ENCODE measurements at regions of chr2 and their contacts with region 1.

Region 1: DNA sequence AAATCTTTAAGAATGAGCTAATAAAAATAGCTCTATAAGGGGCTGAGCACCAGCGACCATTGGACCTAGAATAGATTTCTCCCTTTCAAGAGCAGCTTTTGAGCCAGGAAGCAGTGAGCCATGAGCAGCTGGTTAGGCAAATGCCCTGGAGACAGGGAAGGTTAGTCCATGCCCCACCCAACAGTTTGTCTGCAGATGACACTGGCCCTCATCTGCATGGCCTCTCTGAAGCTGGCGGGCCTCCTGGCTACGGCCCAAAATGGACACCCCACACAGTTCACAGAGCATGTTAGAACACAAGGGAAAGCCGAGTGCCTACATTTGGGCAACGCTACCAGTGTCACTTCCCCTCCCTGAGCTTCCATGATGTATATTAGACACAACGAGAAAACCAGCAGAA is 201.1 kb downstream of the MGAT5 start:
- DNase-seq: peak in 1 of 2 experiments; percentile 15
- H3K4me3 ChIP-seq: no peak overlapping the region
- H3K4me3 Mint-ChIP-seq: no peak overlapping the region
- H3K27ac Mint-ChIP-seq: no peak overlapping the region
- H3K4me1 ChIP-seq: peaks cover 3% of the 10 kb centered on the region; the same call in 1 of the 2 replicates
- H3K4me1 Mint-ChIP-seq: peaks cover 7% of the 10 kb centered on the region
- H3K27me3 ChIP-seq: no peaks in the 10 kb centered on the region
- H3K27me3 Mint-ChIP-seq: no peaks in the 10 kb centered on the region
- CTCF ChIP-seq: no peak

Region 2: DNA sequence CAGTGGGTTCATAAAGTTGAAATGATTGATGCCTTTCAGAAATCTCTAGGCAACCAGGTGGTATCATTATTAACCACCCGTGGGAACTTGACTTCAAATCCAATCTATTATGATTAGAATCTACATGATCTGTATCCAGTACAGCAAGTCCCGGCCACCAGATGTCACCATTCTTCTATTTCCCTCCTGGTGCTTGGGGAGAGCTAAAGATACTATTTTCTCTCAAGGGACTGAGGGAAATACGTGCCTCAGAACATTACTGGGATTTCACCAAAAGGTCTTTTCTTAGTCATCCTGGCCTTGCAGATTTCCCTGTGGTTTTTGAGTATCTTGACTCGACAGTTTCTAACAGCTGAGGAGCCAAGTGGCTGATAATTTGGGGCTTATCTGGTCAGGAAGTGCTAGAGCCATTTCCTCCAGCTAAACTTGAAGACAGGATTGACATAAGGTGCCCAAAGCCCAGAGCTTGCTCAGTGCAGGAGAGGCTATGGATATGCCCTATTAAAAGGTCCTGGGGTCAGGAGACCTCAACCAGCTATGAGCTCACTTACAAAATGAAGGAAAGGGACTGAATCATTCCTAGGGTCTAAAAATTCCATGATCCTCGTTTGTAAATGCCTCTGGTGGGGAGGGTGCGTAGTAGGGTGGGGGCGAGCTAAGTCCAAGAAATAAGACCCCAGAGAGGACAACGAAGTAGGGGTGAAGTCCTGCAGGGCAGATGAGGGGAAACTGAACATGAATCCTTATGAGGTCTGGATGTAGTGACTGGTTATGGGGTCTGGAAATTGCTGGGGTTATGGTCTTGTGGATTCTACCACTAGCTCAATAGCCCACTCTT is 336.4 kb before region 1 on chr2:
- CTCF ChIA-PET with region 1: interaction called, 21 read pairs
- POLR2A ChIA-PET with region 1: no interaction called
- intact Hi-C with region 1: loop called (anchors 1 kb)
- DNase-seq: peak; percentile 81 to 89
- H3K4me3 ChIP-seq: no peak overlapping the region
- H3K4me3 Mint-ChIP-seq: peak overlapping the region; percentile 74
- H3K27ac Mint-ChIP-seq: no peak overlapping the region
- H3K4me1 ChIP-seq: peaks cover under 1% of the 10 kb centered on the region; the same call in 1 of the 2 replicates
- H3K4me1 Mint-ChIP-seq: peaks cover 12% of the 10 kb centered on the region
- H3K27me3 ChIP-seq: no peaks in the 10 kb centered on the region
- H3K27me3 Mint-ChIP-seq: no peaks in the 10 kb centered on the region
- CTCF ChIP-seq: peak; percentile 60 to 84

Region 3: GRCh38 chr2:134375935-134376334 is 79.0 kb before region 1 on chr2:
- CTCF ChIA-PET with region 1: interaction called, 21 read pairs
- POLR2A ChIA-PET with region 1: no interaction called
- intact Hi-C with region 1: loop called (anchors 1 kb)
- DNase-seq: peak; percentile 53 to 58
- H3K4me3 ChIP-seq: no peak overlapping the region
- H3K4me3 Mint-ChIP-seq: no peak overlapping the region
- H3K27ac Mint-ChIP-seq: no peak overlapping the region
- H3K4me1 ChIP-seq: 0 out of 2 replicates have a peak, but pooled peaks cover 5% of the 10 kb centered on the region
- H3K4me1 Mint-ChIP-seq: no peaks in the 10 kb centered on the region
- H3K27me3 ChIP-seq: no peaks in the 10 kb centered on the region
- H3K27me3 Mint-ChIP-seq: no peaks in the 10 kb centered on the region
- CTCF ChIP-seq: peak in 1 of 2 experiments; percentile 58

Region 4: GRCh38 chr2:134391751-134392160 is 63.2 kb before region 1 on chr2:
- CTCF ChIA-PET with region 1: interaction called, 4 read pairs
- POLR2A ChIA-PET with region 1: no interaction called
- intact Hi-C with region 1: loop called (anchors 5 kb)
- DNase-seq: no peak
- H3K4me3 ChIP-seq: no peak overlapping the region
- H3K4me3 Mint-ChIP-seq: no peak overlapping the region
- H3K27ac Mint-ChIP-seq: no peak overlapping the region
- H3K4me1 ChIP-seq: no peaks in the 10 kb centered on the region
- H3K4me1 Mint-ChIP-seq: no peaks in the 10 kb centered on the region
- H3K27me3 ChIP-seq: no peaks in the 10 kb centered on the region
- H3K27me3 Mint-ChIP-seq: no peaks in the 10 kb centered on the region
- CTCF ChIP-seq: no peak

Region 5: DNA sequence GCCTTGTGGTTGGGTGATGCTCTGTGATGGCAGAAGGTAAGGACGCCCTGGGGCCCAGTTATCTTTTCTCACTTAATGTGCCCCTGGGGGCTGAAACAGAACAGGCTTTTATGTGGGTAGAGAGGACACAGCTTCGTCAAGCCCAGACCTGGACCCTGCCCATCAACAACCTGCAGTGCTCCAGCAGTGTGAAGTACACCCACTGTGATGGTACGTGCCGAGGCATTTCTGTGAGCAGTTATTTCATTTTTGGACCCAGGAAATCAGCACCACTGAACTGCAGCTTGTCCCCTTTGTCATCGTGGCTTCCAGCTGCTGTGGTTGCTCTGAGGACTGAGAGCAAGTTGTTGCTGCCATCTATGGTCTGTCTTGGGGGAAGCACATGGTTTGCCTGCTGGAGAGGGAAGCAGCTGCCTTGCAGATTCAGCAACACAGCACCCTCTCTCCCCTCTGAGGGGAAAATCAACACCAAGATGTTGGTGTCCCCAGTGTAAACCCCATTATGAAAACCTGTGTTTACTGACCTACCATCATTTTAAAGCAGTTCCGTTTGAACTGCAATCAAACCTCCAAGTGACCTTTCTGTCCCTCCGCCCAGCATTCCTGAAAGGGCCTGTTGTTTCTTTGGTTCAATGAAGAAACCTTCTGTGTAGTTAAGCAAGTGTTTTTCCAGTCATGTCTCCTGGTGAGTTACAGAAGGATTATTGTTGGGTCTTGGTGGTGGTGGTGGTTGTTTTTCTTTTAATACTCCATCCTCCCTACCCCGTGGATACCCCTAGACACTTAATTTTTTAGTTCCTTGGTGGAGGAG is 42.9 kb before region 1 on chr2:
- CTCF ChIA-PET with region 1: interaction called, 19 read pairs
- POLR2A ChIA-PET with region 1: no interaction called
- intact Hi-C with region 1: loop called (anchors 1 kb)
- DNase-seq: peak; percentile 76 to 84
- H3K4me3 ChIP-seq: no peak overlapping the region
- H3K4me3 Mint-ChIP-seq: no peak overlapping the region
- H3K27ac Mint-ChIP-seq: no peak overlapping the region
- H3K4me1 ChIP-seq: peaks cover 7% of the 10 kb centered on the region
- H3K4me1 Mint-ChIP-seq: peaks cover 12% of the 10 kb centered on the region
- H3K27me3 ChIP-seq: no peaks in the 10 kb centered on the region
- H3K27me3 Mint-ChIP-seq: no peaks in the 10 kb centered on the region
- CTCF ChIP-seq: peak; percentile 75 to 79

Region 6: GRCh38 chr2:134421556-134422328 is 33.2 kb before region 1 on chr2:
- CTCF ChIA-PET with region 1: interaction called, 11 read pairs
- POLR2A ChIA-PET with region 1: no interaction called
- intact Hi-C with region 1: no loop called
- DNase-seq: no peak
- H3K4me3 ChIP-seq: no peak overlapping the region
- H3K4me3 Mint-ChIP-seq: no peak overlapping the region
- H3K27ac Mint-ChIP-seq: no peak overlapping the region
- H3K4me1 ChIP-seq: no peaks in the 10 kb centered on the region
- H3K4me1 Mint-ChIP-seq: no peaks in the 10 kb centered on the region
- H3K27me3 ChIP-seq: no peaks in the 10 kb centered on the region
- H3K27me3 Mint-ChIP-seq: no peaks in the 10 kb centered on the region
- CTCF ChIP-seq: no peak

Region 7: DNA sequence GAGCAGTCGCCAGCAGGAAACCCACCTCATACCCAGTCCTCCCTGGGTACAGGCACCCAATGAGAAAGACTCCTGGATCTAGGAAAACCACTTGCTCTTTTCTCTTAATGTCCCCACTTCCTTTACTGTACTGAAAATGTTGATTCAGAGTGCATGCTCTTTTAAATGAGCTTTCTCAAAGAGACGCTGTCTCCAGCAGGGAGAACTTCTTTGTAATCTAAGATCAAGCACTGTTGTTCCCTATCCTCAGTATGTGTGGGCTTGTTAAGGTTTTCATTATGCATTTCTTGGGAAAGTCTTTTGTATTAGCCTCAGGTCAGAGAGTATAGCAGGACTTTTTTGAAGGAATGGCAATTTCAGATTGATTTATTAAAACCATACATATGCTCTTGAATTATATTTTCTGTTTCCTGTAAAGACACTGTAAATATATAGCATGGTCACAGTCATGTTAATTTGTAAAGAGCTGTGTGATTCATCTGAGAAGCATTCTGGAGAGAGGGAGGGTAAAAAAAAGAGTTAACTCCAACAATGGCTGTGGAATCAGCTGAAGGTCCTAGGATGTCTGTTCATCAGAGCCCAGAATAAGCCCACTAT is 23.0 kb before region 1 on chr2:
- CTCF ChIA-PET with region 1: interaction called, 22 read pairs
- POLR2A ChIA-PET with region 1: no interaction called
- intact Hi-C with region 1: loop called (anchors 1 kb)
- DNase-seq: no peak
- H3K4me3 ChIP-seq: no peak overlapping the region
- H3K4me3 Mint-ChIP-seq: peak overlapping the region; percentile 42
- H3K27ac Mint-ChIP-seq: peak overlapping the region; percentile 78
- H3K4me1 ChIP-seq: peaks cover 31% of the 10 kb centered on the region
- H3K4me1 Mint-ChIP-seq: peaks cover 48% of the 10 kb centered on the region
- H3K27me3 ChIP-seq: no peaks in the 10 kb centered on the region
- H3K27me3 Mint-ChIP-seq: no peaks in the 10 kb centered on the region
- CTCF ChIP-seq: no peak

Measured in Caco-2 (cell line).